ENCODE measurements at regions of chr2 and their contacts with region 1.

Region 1: DNA sequence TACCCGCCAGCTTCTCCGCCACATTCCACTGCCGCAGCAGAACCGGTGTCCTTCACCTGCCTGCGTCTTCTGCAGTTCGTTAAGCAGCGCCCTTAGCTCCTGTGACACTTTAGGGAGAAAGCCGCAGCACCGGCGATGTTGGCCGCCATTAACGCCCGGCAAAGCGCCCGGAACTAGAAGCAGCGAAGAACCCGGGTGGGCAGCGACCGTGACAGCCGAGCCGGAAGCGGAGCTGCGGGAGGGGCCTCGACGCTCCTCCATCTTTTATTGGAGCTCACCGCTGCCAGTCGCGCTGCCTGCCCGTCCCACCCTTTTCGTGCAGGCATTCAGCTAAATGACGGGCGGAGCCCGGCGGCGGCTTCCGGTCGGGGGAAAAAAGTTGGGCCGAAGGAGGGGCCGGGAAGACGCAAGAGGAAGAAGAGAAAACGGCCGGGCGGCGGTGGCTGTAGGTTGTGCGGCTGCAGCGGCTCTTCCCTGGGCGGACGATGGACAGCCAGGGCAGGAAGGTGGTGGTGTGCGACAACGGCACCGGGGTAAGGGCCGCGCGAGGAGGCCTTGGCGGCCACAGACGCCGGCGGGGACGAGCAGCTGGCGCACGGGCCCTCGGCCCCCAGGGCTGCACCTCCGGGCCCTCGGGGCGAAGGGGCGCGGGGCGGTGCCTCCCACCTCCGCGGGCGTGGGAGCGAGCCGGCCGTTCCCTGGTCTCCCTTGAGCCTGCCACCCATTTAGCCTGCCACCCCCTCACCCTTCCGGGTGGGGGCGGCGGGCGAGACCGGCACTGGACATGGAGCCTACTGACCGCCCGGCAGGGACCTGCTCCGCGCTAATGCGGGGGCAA is at the start of gene ACTR2:
- DNase-seq: peak; percentile 92
- ATAC-seq: peak; percentile 95
- H3K4me3 Mint-ChIP-seq: peak within 1 kb of the TSS; percentile 99
- H3K27ac Mint-ChIP-seq: peak within 1 kb of the TSS; percentile 99
- H3K4me1 Mint-ChIP-seq: peaks cover 28% of the 10 kb centered on the region
- H3K27me3 Mint-ChIP-seq: no peaks in the 10 kb centered on the region
- total RNA-seq, gene ACTR2: 382 to 399 TPM

Region 2: DNA sequence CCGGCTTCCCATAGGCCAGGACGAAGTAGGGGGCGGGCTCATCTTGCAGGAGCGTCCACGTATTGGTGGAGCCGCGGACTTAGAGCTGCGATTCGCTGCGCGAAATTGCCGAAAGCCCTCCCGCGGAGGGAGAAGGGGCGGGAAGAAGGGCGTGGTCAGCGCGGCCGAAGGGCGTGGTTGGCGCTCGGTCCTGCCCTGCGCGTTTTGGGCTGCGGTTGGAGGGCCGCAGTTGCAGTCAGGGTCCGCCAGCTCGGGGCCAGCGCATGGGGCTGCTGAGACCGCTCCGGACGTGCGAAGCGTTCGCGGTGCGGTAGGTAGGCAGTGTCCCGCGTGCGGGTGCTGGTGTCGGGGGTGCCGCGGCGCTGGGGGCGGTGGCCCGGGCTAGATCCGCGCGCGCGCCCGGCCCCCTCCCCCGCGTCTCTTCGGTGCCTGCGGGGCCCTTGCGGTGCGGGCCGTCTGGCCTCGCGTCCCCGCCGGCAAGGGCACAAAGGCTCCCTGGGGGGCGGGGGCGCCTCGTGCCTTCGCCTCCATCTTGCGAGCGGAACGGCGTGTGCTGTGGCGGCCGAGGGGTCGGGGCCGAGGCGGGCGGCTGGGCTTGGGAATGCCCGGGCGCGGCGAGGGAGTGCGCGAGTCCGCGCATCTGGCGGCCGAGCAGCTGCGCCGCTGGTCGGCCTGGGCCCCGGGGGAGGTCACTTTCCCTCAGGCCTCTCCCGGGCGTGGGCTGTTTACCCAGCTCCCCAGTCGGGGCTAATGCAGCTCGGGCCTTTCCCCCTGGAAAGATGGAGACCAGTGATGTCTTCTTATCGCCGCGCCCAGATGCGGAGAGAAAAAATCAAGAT is 171.2 kb before region 1 on chr2 and contains the start of gene CEP68:
- POLR2A ChIA-PET with region 1: interaction called, 24 read pairs
- DNase-seq: peak; percentile 93
- ATAC-seq: peak; percentile 92
- H3K4me3 Mint-ChIP-seq: peak within 1 kb of the TSS; percentile 97
- H3K27ac Mint-ChIP-seq: peak within 1 kb of the TSS; percentile 88
- H3K4me1 Mint-ChIP-seq: peaks cover 54% of the 10 kb centered on the region
- H3K27me3 Mint-ChIP-seq: peaks cover 4% of the 10 kb centered on the region
- total RNA-seq, gene CEP68: 20.9 to 22.8 TPM

Region 3: GRCh38 chr2:65096948-65097347 is 130.7 kb before region 1 on chr2:
- POLR2A ChIA-PET with region 1: no interaction called
- DNase-seq: no peak
- ATAC-seq: no peak
- H3K4me3 Mint-ChIP-seq: no peak overlapping the region
- H3K27ac Mint-ChIP-seq: no peak overlapping the region
- H3K4me1 Mint-ChIP-seq: peaks cover 18% of the 10 kb centered on the region
- H3K27me3 Mint-ChIP-seq: no peaks in the 10 kb centered on the region

Region 4: GRCh38 chr2:65129826-65130663 is 97.6 kb before region 1 on chr2 and contains the start of gene RAB1A:
- POLR2A ChIA-PET with region 1: interaction called, 43 read pairs
- DNase-seq: peak; percentile 97
- ATAC-seq: peak; percentile 97
- H3K4me3 Mint-ChIP-seq: peak within 1 kb of the TSS; percentile 100
- H3K27ac Mint-ChIP-seq: peak within 1 kb of the TSS; percentile 99
- H3K4me1 Mint-ChIP-seq: peaks cover 25% of the 10 kb centered on the region
- H3K27me3 Mint-ChIP-seq: peaks cover 2% of the 10 kb centered on the region
- total RNA-seq, gene RAB1A: 55.5 to 61.9 TPM

Region 5: GRCh38 chr2:65215946-65216345 is 11.7 kb before region 1 on chr2:
- POLR2A ChIA-PET with region 1: interaction called, 13 read pairs
- DNase-seq: no peak
- ATAC-seq: no peak
- H3K4me3 Mint-ChIP-seq: no peak overlapping the region
- H3K27ac Mint-ChIP-seq: no peak overlapping the region
- H3K4me1 Mint-ChIP-seq: no peaks in the 10 kb centered on the region
- H3K27me3 Mint-ChIP-seq: no peaks in the 10 kb centered on the region

Region 6: GRCh38 chr2:65256054-65256453 is 28.4 kb after region 1 on chr2:
- POLR2A ChIA-PET with region 1: no interaction called
- DNase-seq: no peak
- ATAC-seq: no peak
- H3K4me3 Mint-ChIP-seq: no peak overlapping the region
- H3K27ac Mint-ChIP-seq: no peak overlapping the region
- H3K4me1 Mint-ChIP-seq: peaks cover 9% of the 10 kb centered on the region
- H3K27me3 Mint-ChIP-seq: no peaks in the 10 kb centered on the region

Region 7: GRCh38 chr2:65278531-65278981 is 50.9 kb after region 1 on chr2:
- POLR2A ChIA-PET with region 1: no interaction called
- DNase-seq: no peak
- ATAC-seq: peak; percentile 31
- H3K4me3 Mint-ChIP-seq: no peak overlapping the region
- H3K27ac Mint-ChIP-seq: no peak overlapping the region
- H3K4me1 Mint-ChIP-seq: peaks cover 10% of the 10 kb centered on the region
- H3K27me3 Mint-ChIP-seq: peaks cover 1% of the 10 kb centered on the region

Measured in activated naive CD8-positive, alpha-beta T cell treated with anti-CD3 and anti-CD28 coated beads, Interleukin-2, amount 10 ng/mL, durations not matched to agents 7 days and 5 days (primary cell).